ENCODE measurements at regions of chr12 and their contacts with region 1.

Region 1: DNA sequence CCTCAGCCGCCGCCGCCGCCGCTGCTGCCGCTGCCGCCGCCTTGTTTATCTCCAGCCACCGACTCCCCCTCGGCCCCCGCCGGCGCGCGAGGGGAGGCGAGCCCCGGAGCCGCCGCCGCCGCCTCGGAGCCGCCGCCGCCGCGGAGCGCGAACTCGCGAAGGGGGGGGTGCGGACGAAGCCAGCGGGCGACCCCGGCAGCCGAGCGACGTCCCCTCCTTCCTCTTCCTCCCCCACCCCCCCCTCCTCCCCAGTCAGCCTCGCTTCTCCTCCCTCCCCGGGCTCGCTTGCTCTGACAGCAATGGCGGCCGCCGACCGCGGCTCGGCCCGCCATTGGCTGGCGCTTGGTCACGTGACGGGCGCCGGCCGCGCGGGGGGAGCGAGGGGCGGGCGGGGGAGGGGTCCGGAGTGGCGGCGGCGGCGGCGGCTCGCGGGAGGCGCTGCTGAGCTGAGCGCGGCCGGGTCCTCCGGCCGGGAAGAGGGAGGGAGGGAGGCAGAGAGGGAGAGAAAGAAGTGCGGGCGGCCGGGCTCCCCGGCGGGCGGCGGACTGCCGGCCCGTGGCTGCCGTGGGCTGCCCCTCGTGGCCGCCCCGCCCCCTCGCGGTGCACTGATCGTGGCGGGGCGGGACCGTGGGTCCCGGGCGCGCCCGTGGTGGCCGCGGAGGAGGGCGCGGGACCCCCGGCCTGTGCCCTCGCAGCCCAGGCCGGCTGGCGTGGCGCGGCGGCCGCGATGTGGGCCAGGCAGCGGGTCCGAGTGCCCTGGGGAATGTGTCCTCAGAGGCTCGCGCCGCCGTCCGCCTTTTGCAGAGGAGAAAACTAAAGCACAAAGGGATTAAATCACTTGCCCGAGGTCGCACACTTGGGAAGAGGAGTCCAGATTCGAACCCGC is at the start of gene MED13L:
- DNase-seq: peak; percentile 91
- H3K4me3 Mint-ChIP-seq: peak within 1 kb of the TSS; percentile 93
- H3K27ac Mint-ChIP-seq: peak within 1 kb of the TSS; percentile 86
- H3K4me1 Mint-ChIP-seq: peaks cover 36% of the 10 kb centered on the region
- H3K27me3 Mint-ChIP-seq: no peaks in the 10 kb centered on the region
- total RNA-seq, gene MED13L: 37.7 to 41.4 TPM

Region 2: DNA sequence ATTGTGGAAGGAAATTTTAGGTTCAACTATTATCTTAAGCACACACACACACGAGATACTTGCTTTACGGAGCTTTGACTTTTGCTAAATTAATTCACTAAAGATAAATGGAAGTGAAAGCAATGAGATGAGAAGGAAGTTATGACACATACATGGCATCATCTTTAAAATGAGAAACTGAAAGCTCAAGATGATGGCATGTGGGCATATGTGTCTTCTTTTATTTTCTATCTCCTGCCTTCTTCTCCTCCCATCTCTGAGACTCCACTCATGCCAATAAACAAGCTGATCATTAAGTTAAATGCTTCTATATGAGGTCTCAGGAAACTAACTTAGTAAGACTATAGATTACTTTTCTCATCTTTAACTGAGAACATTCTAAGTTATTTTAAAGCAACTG is 216.9 kb before region 1 on chr12:
- CTCF ChIA-PET with region 1: interaction called, 4 read pairs
- POLR2A ChIA-PET with region 1: no interaction called
- intact Hi-C with region 1: loop called (anchors 5 kb)
- DNase-seq: no peak
- H3K4me3 Mint-ChIP-seq: peak overlapping the region; percentile 58
- H3K27ac Mint-ChIP-seq: peak overlapping the region; percentile 47
- H3K4me1 Mint-ChIP-seq: peaks cover 48% of the 10 kb centered on the region
- H3K27me3 Mint-ChIP-seq: no peaks in the 10 kb centered on the region

Region 3: DNA sequence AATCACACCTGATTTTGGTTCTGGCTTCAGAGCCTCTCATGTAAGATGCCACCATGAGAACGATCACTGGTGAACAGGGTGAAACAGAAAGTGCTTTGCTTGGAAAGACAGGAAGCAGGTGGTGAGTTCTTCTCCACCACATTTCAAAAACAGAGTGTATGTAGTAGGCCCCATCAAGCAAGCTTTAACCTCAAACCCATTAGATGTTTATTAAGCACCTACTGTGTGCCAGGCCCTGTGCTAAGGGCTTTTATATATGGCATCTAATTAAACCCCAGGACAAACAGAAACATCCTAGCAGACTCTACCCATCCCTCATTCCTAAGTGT is 47.7 kb after region 1 on chr12:
- CTCF ChIA-PET with region 1: no interaction called
- POLR2A ChIA-PET with region 1: no interaction called
- intact Hi-C with region 1: loop called (anchors 2 kb)
- DNase-seq: peak; percentile 14
- H3K4me3 Mint-ChIP-seq: no peak overlapping the region
- H3K27ac Mint-ChIP-seq: no peak overlapping the region
- H3K4me1 Mint-ChIP-seq: peaks cover 29% of the 10 kb centered on the region
- H3K27me3 Mint-ChIP-seq: no peaks in the 10 kb centered on the region

Region 4: DNA sequence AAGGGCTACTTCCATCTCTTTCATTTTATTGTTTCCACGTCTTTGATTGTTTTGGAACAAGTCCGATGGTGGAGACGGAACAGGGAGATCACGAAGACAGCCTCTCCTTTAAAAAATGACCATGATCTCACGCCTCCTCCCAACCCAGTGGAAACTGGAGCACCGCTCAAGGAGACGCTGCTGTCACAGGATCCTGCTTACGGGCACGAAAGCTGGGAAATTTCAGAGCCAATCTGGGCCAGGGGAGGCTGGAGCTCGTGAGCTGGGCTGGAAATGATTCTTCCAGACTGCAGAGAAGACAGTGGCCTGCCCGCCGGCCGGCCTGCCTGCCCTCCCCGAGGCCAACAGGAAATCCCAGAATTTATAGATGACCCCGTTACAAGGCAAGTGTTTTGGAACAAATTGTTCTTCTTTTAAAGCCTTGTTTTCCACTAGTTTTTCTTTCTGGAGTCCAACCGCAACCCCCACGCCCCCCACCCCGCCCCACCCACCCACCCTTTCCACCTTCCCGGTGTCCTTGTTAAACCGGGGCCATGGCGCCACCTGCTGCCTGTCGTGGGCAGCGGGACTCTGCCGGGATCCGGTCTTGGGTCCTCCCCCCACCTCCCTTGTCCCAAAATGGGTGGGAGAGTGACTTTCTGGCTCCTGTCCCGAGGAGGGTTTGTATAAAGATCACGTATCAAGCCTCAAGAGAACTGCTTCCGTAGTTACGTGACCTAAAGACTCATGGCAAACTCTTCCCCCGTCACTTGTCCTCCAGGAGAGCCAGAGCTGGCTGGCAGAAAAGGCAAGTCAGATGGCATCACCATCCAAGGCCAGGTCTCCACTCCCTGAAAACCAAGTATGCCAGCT is 321.9 kb after region 1 on chr12:
- CTCF ChIA-PET with region 1: interaction called, 4 read pairs
- POLR2A ChIA-PET with region 1: no interaction called
- intact Hi-C with region 1: loop called (anchors 2 kb)
- DNase-seq: peak; percentile 74
- H3K4me3 Mint-ChIP-seq: no peak overlapping the region
- H3K27ac Mint-ChIP-seq: no peak overlapping the region
- H3K4me1 Mint-ChIP-seq: peaks cover 16% of the 10 kb centered on the region
- H3K27me3 Mint-ChIP-seq: no peaks in the 10 kb centered on the region

Region 5: GRCh38 chr12:116818948-116819832 is 541.6 kb after region 1 on chr12:
- CTCF ChIA-PET with region 1: no interaction called
- POLR2A ChIA-PET with region 1: no interaction called
- intact Hi-C with region 1: loop called (anchors 5 kb)
- DNase-seq: peak; percentile 92
- H3K4me3 Mint-ChIP-seq: peak overlapping the region; percentile 93
- H3K27ac Mint-ChIP-seq: peak overlapping the region; percentile 85
- H3K4me1 Mint-ChIP-seq: peaks cover 15% of the 10 kb centered on the region
- H3K27me3 Mint-ChIP-seq: no peaks in the 10 kb centered on the region